ENCODE measurements at regions of chr10 and their contacts with region 1.

Region 1: GRCh38 chr10:3197348-3198003 is 24.9 kb upstream of the PITRM1 start:
- DNase-seq: peak in 5 of 9 donors; percentile 25 to 82 (median 29)
- ATAC-seq: peak; percentile 72
- H3K4me3 ChIP-seq: peak overlapping the region; percentile 46
- H3K4me3 Mint-ChIP-seq: peak overlapping the region; percentile 56 to 76 (median 72)
- H3K27ac ChIP-seq: no peak overlapping the region
- H3K27ac Mint-ChIP-seq: peak overlapping the region in 1 of 9 donors; percentile 70
- H3K4me1 ChIP-seq: peaks cover 3 to 23% of the 10 kb centered on the region in 2 donors
- H3K4me1 Mint-ChIP-seq: peaks cover 0 to 16% (median 8%) of the 10 kb centered on the region in 7 donors
- H3K27me3 ChIP-seq: no peaks in the 10 kb centered on the region
- H3K27me3 Mint-ChIP-seq: peaks cover 22 to 88% (median 39%) of the 10 kb centered on the region in 5 donors

Region 2: GRCh38 chr10:2619472-2619871 is 578.0 kb before region 1 on chr10:
- CTCF ChIA-PET with region 1: no interaction called
- POLR2A ChIA-PET with region 1: no interaction called
- intact Hi-C with region 1: no loop called
- DNase-seq: no peak
- ATAC-seq: no peak
- H3K4me3 ChIP-seq: no peak overlapping the region
- H3K4me3 Mint-ChIP-seq: no peak overlapping the region
- H3K27ac ChIP-seq: no peak overlapping the region
- H3K27ac Mint-ChIP-seq: no peak overlapping the region
- H3K4me1 ChIP-seq: no peaks in the 10 kb centered on the region
- H3K4me1 Mint-ChIP-seq: no peaks in the 10 kb centered on the region
- H3K27me3 ChIP-seq: no peaks in the 10 kb centered on the region
- H3K27me3 Mint-ChIP-seq: peaks cover 0 to 19% (median 4%) of the 10 kb centered on the region in 5 donors

Region 3: DNA sequence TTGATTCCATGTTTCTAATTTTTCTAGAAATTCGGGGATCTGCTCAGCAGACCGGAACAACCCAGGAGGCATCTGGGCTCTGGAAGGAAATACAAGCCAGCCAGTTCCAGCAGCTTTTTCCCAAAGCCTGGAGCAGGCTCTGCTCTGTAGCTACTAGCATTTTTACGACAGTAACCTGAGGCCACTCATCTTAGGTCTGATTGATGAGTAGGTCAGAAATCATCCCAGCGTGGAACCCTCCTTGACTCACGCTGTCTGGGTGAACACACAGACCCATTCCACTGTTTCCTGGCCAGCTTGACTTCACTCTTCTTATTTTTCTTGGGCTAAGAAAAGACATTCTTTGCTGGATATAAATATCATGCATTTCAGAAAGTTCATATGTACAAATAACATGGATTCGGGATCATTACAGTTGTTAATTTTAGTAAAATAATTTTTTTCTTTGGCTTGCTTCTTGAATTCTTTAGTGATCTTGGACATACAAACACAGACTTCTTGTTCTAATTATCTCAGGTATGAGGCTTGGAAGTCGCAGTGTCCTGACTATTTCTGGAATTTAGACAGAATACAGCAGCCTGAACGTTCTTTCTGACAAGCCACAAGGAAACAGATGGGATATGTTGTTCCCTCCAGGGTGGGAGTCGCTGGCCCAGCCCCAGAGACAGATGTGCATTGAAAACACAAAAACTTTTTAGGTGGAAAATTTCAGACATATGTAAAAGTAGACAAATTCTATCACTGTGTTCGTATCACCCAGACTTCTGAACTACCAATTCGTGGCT is 29.7 kb after region 1 on chr10:
- CTCF ChIA-PET with region 1: no interaction called
- POLR2A ChIA-PET with region 1: no interaction called
- intact Hi-C with region 1: loop called in 1 of 2 experiments (anchors 1 kb)
- DNase-seq: no peak
- ATAC-seq: no peak
- H3K4me3 ChIP-seq: no peak overlapping the region
- H3K4me3 Mint-ChIP-seq: no peak overlapping the region
- H3K27ac ChIP-seq: no peak overlapping the region
- H3K27ac Mint-ChIP-seq: peak overlapping the region in 1 of 9 donors; percentile 23
- H3K4me1 ChIP-seq: peaks cover 0 to 25% of the 10 kb centered on the region in 2 donors
- H3K4me1 Mint-ChIP-seq: peaks cover 6 to 14% (median 8%) of the 10 kb centered on the region in 7 donors
- H3K27me3 ChIP-seq: no peaks in the 10 kb centered on the region
- H3K27me3 Mint-ChIP-seq: peaks cover 0 to 31% (median 0%) of the 10 kb centered on the region in 5 donors

Region 4: GRCh38 chr10:4767033-4767814 is 1569.7 kb after region 1 on chr10:
- CTCF ChIA-PET with region 1: interaction called, 7 read pairs
- POLR2A ChIA-PET with region 1: no interaction called
- intact Hi-C with region 1: loop called (anchors 1 kb)
- DNase-seq: peak in 2 of 9 donors; percentile 0 to 14
- ATAC-seq: no peak
- H3K4me3 ChIP-seq: no peak overlapping the region
- H3K4me3 Mint-ChIP-seq: no peak overlapping the region
- H3K27ac ChIP-seq: no peak overlapping the region
- H3K27ac Mint-ChIP-seq: no peak overlapping the region
- H3K4me1 ChIP-seq: no peaks in the 10 kb centered on the region
- H3K4me1 Mint-ChIP-seq: no peaks in the 10 kb centered on the region
- H3K27me3 ChIP-seq: peaks cover 0 to 3% of the 10 kb centered on the region in 2 donors
- H3K27me3 Mint-ChIP-seq: peaks cover 17 to 43% (median 32%) of the 10 kb centered on the region in 5 donors